ENCODE measurements at regions of chr5 and their contacts with region 1.

Region 1: GRCh38 chr5:159444441-159445082 is 114.3 kb upstream of the IL12B start:
- DNase-seq: peak; percentile 60
- CTCF ChIP-seq: peak; percentile 55

Region 2: DNA sequence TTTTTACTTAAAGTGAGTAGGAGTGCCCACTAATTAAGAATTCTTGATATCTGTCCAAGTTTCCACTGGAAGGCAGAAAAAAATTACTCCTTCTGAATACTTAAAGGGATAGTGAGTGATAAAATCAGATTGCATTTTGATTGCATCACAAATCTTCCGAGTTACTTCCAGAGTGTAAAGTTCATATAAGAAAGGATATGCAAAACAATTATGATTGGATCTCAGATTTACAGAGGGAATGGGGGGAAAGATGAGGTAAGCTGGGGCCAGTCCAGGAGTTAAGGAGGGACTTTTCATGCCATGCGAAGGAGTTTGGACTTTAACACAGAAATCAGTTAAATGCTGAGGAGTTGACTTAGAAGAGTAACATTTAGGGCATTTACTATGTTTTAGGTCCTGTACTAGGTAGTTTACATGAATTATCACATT is 226.0 kb before region 1 on chr5:
- in situ Hi-C with region 1: no loop called
- DNase-seq: no peak
- CTCF ChIP-seq: no peak

Region 3: DNA sequence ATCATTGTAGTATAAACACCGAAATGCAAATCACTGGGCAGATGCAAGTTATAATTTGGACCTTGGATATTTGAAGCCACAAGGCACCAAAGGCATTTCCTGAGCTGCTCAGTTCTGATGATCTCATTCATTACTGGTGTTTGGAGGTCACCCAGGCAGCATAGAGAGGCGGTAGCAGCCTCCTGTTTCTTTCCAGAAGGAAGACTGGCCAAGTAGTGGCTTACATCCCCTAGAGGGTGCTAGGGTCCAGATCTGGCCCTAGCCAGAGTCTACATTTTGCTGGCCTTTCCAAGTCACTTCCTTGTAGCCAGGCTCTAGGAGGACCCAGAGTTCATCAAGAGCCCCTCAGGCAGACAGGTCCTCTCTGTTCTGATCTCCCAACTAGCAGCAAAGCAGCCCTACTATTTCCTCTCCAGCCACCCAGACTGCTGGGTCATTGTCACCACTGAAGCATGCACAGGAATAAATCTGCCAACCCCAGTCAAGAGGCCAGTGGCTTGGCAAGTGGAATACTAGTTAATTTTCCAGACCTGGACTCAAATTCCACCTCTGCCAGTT is 531.0 kb after region 1 on chr5:
- in situ Hi-C with region 1: loop called (anchors 10 kb)
- DNase-seq: no peak
- CTCF ChIP-seq: no peak

Measured in GM13977 (cell line).